Left cardiac atrium (tissue), 4 donors: ENCODE measurements at regions of chr1 and their contacts with region 1.

Region 1: GRCh38 chr1:6235296-6235677 is 477 bp downstream of the ICMT start:
- DNase-seq: no peak
- ATAC-seq: no peak

Region 2: DNA sequence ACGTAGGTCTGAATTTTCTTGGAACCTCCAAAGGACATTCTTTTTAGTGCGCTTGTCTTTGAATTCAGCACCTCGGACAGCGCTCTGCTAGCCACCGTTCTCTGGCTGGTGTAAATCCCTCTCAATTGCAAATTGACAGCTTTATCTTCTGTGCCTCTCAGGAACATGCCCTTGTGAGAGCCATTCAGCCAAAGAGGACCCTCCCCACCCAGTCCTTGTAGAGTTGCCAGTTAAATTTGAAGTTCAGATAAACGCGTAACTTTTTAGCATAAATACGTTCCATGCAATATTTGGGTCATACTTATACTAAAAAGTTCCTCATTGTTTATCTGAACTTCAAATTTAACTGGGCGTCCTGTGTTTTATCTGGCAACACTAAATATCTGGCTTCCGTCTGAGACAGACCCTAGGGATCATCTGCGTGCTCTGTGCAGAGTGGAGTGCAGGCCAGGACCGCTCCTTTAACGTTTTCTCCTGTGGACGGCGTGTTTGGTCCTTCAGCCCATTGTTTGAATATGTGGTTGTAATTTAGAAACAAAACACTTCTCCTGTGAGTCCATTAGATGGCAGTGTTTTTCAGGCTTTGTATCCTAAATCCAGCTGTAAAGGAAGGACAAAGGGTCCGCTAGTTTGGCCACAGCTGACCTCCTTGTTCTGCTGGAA is 182.6 kb before region 1 on chr1:
- intact Hi-C with region 1: loop called (anchors 5 kb)
- DNase-seq: peak; percentile 69
- ATAC-seq: peak; percentile 44 to 79

Region 3: DNA sequence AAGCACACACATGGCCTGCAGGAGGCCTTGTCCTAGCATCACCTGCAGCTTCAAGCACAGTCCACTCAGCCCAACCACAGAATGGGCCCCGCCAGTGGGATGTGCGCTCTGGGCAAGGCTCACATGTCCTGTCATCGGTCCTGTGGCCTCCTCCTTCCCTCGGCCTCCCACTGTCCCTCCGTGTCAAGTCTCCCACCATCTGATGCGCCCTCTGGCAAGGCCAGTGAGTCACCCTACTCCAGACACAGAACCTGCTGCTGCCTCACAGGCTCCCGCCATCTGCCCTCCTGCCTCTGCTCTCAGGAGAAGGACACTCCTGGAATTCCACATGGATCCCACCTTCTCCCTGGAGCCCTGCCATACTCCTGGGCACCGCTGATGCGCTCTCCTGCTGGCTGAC is 175.4 kb before region 1 on chr1:
- intact Hi-C with region 1: loop called in 1 of 2 experiments (anchors 5 kb)
- DNase-seq: no peak
- ATAC-seq: no peak

Region 4: DNA sequence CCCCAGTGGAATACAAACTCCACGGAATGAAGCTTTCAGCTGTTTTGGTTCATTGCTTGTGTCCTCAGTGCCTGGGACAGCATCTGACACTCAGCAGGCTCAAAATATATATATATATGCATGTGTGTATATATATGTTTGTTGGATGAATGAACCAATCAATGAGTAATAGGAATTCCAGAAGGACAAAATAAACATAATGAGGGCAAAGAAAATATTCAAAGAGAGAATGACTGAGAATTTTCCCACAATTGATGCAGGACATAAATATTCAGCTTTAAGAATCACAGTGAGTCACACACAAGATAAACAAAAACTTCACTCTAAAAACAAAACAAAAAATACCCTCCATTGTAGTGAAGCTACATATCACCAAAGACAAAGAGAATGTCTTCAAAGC is 119.2 kb before region 1 on chr1:
- intact Hi-C with region 1: no loop called
- DNase-seq: no peak
- ATAC-seq: no peak

Region 5: GRCh38 chr1:6199298-6200187 is 35.7 kb before region 1 on chr1 and contains the start of gene RPL22:
- intact Hi-C with region 1: loop called in 1 of 2 experiments (anchors 5 kb)
- DNase-seq: peak; percentile 99
- ATAC-seq: peak; percentile 98 to 99
- total RNA-seq, gene RPL22: 264 to 275 TPM

Region 6: DNA sequence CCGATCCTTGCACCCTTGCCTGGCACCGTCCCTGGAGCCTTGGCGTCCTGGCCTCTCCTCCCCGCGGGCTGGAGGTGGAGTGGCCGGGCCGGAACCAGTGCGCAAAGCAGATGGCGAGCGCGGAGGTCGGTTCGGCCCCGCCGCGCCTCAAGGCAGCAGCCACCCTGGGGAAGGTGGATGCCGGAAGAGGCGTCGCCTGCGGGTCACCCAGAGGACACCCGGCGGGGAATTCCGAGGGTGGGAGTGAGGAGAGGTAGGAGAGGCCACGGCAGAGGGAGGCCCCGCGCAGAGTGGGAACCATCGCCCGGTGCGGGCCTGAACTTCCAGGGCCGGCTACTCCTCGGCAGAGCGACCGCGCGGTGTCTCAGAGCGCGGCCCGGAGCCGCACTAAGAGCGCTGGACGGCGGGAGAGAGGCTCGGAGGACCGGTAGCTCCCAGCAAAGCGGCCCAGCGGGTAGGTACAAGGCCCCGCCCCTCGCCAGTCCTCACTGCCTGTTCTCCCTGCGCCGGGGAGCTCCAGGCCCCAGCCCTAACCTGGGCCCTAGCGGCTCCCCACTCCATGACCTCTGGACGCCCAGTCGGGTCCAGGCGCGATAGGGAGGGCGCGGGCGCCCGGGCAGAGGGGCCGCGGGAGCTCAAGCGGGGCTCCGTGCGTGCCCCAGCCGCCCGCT is 29.3 kb before region 1 on chr1 and contains the start of gene RNF207:
- intact Hi-C with region 1: loop called in 1 of 2 experiments (anchors 5 kb)
- DNase-seq: peak; percentile 74
- ATAC-seq: peak; percentile 54 to 77
- total RNA-seq, gene RNF207: 35.8 to 38.3 TPM

Region 7: DNA sequence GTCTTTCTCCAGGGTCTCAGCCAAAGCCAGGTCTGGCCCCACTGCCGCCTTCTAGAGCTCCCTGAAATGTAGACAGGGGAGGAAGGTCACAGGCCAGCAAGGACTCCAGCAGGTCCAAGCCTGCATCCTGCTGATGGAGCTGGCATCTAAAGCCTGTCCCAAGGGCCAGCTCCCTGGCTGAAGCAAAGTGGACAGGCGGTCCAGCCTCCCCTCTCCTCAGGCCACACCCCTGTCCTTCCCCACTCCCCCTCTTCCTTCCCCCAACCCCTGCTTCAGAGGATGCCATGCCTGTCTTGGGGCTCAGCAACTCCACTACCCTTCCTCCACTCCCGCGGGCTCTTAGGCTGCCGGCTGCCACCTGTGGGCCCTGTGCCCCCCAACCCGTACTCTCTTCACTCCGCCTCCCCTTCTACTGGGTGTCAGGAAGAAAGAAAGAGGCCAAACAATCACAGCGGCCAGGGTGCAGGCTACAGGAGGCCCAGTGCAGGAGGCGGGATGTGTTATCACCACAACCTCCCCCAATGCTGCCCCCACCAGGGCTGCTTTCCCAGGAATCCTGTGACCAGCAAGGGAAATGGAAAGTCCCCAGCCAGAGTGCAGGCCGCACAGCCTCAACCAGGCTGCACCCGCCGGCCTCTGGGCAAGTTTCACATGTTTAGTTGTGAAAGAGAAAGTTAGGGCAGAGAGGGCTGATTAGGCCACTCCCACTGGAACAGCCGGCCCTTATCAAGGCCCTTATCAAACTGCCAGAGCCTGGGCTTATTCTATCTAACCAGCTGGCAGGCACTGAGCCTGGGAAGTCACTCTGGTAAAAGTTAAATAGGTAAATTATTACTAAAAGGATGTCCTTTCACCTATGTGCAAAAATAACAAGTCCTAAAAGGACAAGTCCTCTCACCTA is 124.2 kb after region 1 on chr1:
- intact Hi-C with region 1: no loop called
- DNase-seq: peak; percentile 75
- ATAC-seq: peak; percentile 81 to 87